Transverse colon (tissue), 4 donors: ENCODE measurements at regions of chr10 and their contacts with region 1.

Region 1: GRCh38 chr10:30591249-30591670 is 38.3 kb downstream of the LYZL2 start:
- DNase-seq: peak; percentile 29
- H3K4me3 ChIP-seq: no peak overlapping the region
- H3K27ac ChIP-seq: no peak overlapping the region
- H3K4me1 ChIP-seq: peaks cover 0 to 6% (median 1%) of the 10 kb centered on the region in 4 donors
- H3K27me3 ChIP-seq: no peaks in the 10 kb centered on the region
- CTCF ChIP-seq: peak; percentile 75 to 86 (median 81)
- EP300 ChIP-seq: no peak
- POLR2A ChIP-seq: no peak

Region 2: GRCh38 chr10:30080161-30080560 is 511.1 kb before region 1 on chr10:
- in situ Hi-C with region 1: no loop called
- intact Hi-C with region 1: no loop called
- DNase-seq: no peak
- H3K4me3 ChIP-seq: no peak overlapping the region
- H3K27ac ChIP-seq: no peak overlapping the region
- H3K4me1 ChIP-seq: no peaks in the 10 kb centered on the region
- H3K27me3 ChIP-seq: no peaks in the 10 kb centered on the region
- CTCF ChIP-seq: no peak
- EP300 ChIP-seq: no peak
- POLR2A ChIP-seq: no peak

Region 3: GRCh38 chr10:30392564-30392990 is 198.7 kb before region 1 on chr10:
- in situ Hi-C with region 1: loop called (anchors 5 to 10 kb)
- intact Hi-C with region 1: loop called (anchors 2 kb)
- DNase-seq: peak; percentile 79
- H3K4me3 ChIP-seq: peak overlapping the region in 1 of 4 donors; percentile 21
- H3K27ac ChIP-seq: no peak overlapping the region
- H3K4me1 ChIP-seq: peaks cover 0 to 4% (median 0%) of the 10 kb centered on the region in 4 donors
- H3K27me3 ChIP-seq: no peaks in the 10 kb centered on the region
- CTCF ChIP-seq: peak; percentile 90 to 98 (median 94)
- EP300 ChIP-seq: no peak
- POLR2A ChIP-seq: no peak

Region 4: DNA sequence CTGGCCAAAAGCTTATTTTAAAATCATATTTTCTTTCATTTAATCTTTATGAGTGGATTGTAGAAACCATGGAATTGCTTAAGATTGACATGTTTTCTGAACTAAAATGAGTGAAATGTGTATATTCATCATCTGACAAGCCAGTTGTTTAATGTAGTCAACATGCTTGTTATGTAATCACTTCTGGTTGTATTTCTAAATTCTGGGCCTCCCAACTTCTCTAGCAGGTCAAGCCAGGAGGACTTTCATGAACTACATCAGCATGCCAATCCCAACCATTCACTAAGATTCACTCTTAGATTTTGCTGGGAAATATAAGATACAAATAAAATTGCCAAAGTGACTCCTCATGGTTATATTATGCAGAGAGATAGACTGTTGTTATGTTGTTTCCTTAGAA is 178.4 kb before region 1 on chr10:
- in situ Hi-C with region 1: no loop called
- intact Hi-C with region 1: no loop called
- DNase-seq: no peak
- H3K4me3 ChIP-seq: no peak overlapping the region
- H3K27ac ChIP-seq: no peak overlapping the region
- H3K4me1 ChIP-seq: no peaks in the 10 kb centered on the region
- H3K27me3 ChIP-seq: no peaks in the 10 kb centered on the region
- CTCF ChIP-seq: no peak
- EP300 ChIP-seq: no peak
- POLR2A ChIP-seq: no peak

Region 5: GRCh38 chr10:30662814-30663213 is 71.6 kb after region 1 on chr10:
- in situ Hi-C with region 1: no loop called
- intact Hi-C with region 1: no loop called
- DNase-seq: no peak
- H3K4me3 ChIP-seq: no peak overlapping the region
- H3K27ac ChIP-seq: no peak overlapping the region
- H3K4me1 ChIP-seq: no peaks in the 10 kb centered on the region
- H3K27me3 ChIP-seq: no peaks in the 10 kb centered on the region
- CTCF ChIP-seq: no peak
- EP300 ChIP-seq: no peak
- POLR2A ChIP-seq: no peak

Region 6: GRCh38 chr10:30763918-30764317 is 172.7 kb after region 1 on chr10:
- in situ Hi-C with region 1: no loop called
- intact Hi-C with region 1: no loop called
- DNase-seq: peak; percentile 54
- H3K4me3 ChIP-seq: no peak overlapping the region
- H3K27ac ChIP-seq: peak overlapping the region; percentile 65 to 88 (median 76)
- H3K4me1 ChIP-seq: peaks cover 0 to 8% (median 4%) of the 10 kb centered on the region in 4 donors
- H3K27me3 ChIP-seq: no peaks in the 10 kb centered on the region
- CTCF ChIP-seq: no peak
- EP300 ChIP-seq: peak; percentile 79
- POLR2A ChIP-seq: no peak